ENCODE measurements at regions of chrX and their contacts with region 1.

Region 1: DNA sequence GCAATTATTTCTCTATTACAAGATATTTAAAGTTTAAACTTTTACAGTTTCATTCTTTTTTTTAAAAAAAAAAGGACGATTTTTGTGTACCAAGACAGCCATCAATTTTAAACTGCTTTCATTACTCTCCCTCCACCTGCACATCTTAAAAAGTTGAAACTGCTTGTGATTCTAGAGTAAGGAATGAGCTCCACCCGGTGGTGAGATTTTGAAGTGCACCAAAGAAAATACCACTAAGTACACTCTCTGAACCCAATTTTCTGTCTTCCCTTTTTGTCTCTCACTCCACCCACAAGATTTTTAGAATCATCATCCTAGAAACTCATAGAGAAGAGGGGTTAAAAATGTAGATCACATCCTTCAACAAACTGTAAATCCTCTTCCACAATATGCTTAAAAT is 91.3 kb upstream of the WDR44 start:
- DNase-seq: peak; percentile 75
- H3K4me3 ChIP-seq: no peak overlapping the region
- H3K27ac ChIP-seq: no peak overlapping the region
- H3K4me1 ChIP-seq: no peaks in the 10 kb centered on the region
- H3K27me3 ChIP-seq: no peaks in the 10 kb centered on the region
- CTCF ChIP-seq: peak; percentile 77

Region 2: GRCh38 chrX:116490104-116490503 is 1764.5 kb before region 1 on chrX:
- CTCF ChIA-PET with region 1: no interaction called
- POLR2A ChIA-PET with region 1: no interaction called
- intact Hi-C with region 1: loop called (anchors 5 kb)
- DNase-seq: peak; percentile 11
- H3K4me3 ChIP-seq: no peak overlapping the region
- H3K27ac ChIP-seq: no peak overlapping the region
- H3K4me1 ChIP-seq: no peaks in the 10 kb centered on the region
- H3K27me3 ChIP-seq: no peaks in the 10 kb centered on the region
- CTCF ChIP-seq: peak; percentile 56

Region 3: DNA sequence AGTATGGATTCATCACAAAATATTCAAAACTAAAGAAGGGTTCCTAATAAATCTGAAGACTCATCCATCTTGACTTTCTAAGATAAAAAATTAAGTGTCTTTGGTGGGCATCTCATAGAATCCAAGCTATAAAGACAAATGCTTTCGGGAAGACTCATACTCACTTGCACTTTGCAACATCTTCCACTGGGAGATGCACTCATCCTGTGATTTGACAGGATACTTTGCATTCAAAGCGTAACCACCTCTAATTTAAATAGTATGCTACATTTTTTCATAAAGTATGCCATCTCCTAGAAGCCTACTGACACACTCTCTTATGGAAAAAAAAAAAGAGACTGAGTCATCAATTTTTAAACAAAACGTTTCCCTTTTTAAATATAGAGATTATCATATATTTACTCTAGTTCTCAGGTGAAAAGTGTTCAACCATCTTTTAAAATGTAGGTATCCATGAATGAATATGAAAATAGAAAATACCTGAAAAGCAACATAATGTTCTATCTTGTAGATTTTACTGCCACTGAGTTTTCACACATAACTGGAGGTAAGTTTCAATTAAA is 257.6 kb before region 1 on chrX:
- CTCF ChIA-PET with region 1: interaction called, 8 read pairs
- POLR2A ChIA-PET with region 1: no interaction called
- intact Hi-C with region 1: loop called (anchors 2 kb)
- DNase-seq: peak; percentile 57
- H3K4me3 ChIP-seq: no peak overlapping the region
- H3K27ac ChIP-seq: no peak overlapping the region
- H3K4me1 ChIP-seq: peaks cover 10% of the 10 kb centered on the region
- H3K27me3 ChIP-seq: no peaks in the 10 kb centered on the region
- CTCF ChIP-seq: peak; percentile 62

Region 4: DNA sequence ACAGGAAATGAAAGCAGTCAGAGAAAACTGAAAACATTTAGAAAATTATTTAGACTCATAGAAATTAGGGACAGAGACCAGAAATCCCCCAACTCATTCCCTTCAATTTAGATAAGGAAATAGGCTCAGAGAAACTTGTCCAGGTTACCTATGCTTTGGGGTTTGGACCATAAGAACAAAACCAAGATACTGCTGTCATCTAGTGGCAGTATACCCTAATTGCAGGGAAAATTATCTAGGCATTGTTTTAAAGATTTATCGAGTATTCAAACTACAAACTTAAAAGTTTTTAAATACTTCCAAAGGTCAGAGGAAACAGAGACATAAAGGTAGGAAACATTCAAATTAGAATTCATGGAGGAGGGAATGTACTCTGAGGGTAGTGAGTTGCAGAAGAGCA is 71.0 kb before region 1 on chrX:
- CTCF ChIA-PET with region 1: no interaction called
- POLR2A ChIA-PET with region 1: no interaction called
- intact Hi-C with region 1: no loop called
- DNase-seq: no peak
- H3K4me3 ChIP-seq: no peak overlapping the region
- H3K27ac ChIP-seq: no peak overlapping the region
- H3K4me1 ChIP-seq: no peaks in the 10 kb centered on the region
- H3K27me3 ChIP-seq: no peaks in the 10 kb centered on the region
- CTCF ChIP-seq: peak; percentile 43; the same call in 1 of the 2 replicates

Measured in A673 (cell line).